HepG2 (cell line): ENCODE measurements at regions of chr10 and their contacts with region 1.

Region 1: DNA sequence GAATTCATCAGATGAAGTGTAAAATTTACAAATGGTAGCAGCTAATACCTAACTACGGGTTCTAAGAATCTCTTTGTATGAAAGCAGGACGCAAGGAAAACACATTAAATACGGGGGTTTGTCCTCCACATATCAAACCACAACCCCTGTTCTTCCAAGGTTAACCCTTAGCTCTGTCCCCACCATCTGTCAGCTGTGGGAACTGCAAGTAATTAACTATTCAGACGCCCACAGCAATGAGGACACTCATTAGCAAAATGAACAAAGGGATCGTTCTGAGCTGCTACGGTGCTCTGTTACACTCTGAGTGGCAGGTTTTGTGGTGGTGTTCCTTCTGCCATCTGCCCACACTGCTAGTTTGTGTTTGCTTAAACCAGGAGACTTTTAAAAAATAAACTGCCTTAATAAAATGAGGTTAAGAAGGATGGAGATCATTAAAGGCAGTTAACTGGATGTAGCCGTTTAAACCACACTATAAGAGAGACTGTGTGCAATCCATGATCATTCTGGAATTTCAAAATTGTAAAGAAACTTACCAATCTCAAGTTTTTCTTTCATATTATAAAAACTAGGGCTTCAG is 51.4 kb downstream of the C10orf67 start:
- DNase-seq: peak; percentile 53
- ATAC-seq: peak; percentile 85
- H3K4me3 ChIP-seq: no peak overlapping the region
- H3K27ac ChIP-seq: no peak overlapping the region
- H3K4me1 ChIP-seq: no peaks in the 10 kb centered on the region
- H3K27me3 ChIP-seq: 0 out of 5 replicates have a peak, but pooled peaks cover 0 to 3% of the 10 kb centered on the region in 2 experiments
- CTCF ChIP-seq: peak; percentile 89
- EP300 ChIP-seq: no peak
- POLR2A ChIP-seq: no peak
- RAD21 ChIP-seq: peak; percentile 75

Region 2: GRCh38 chr10:23081891-23082290 is 211.3 kb before region 1 on chr10:
- CTCF ChIA-PET with region 1: no interaction called
- POLR2A ChIA-PET with region 1: no interaction called
- in situ Hi-C with region 1: no loop called
- intact Hi-C with region 1: loop called (anchors 5 kb)
- DNase-seq: peak; percentile 23
- ATAC-seq: peak; percentile 76
- H3K4me3 ChIP-seq: no peak overlapping the region
- H3K27ac ChIP-seq: no peak overlapping the region
- H3K4me1 ChIP-seq: no peaks in the 10 kb centered on the region
- H3K27me3 ChIP-seq: peaks cover 2 to 23% of the 10 kb centered on the region in 2 experiments; a peak in 4 of 5 replicates
- CTCF ChIP-seq: peak; percentile 40
- EP300 ChIP-seq: no peak
- POLR2A ChIP-seq: no peak
- RAD21 ChIP-seq: no peak

Region 3: GRCh38 chr10:23270531-23270930 is 22.7 kb before region 1 on chr10:
- CTCF ChIA-PET with region 1: no interaction called
- POLR2A ChIA-PET with region 1: no interaction called
- in situ Hi-C with region 1: no loop called
- intact Hi-C with region 1: no loop called
- DNase-seq: no peak
- ATAC-seq: no peak
- H3K4me3 ChIP-seq: no peak overlapping the region
- H3K27ac ChIP-seq: no peak overlapping the region
- H3K4me1 ChIP-seq: peaks cover 7% of the 10 kb centered on the region
- H3K27me3 ChIP-seq: no peaks in the 10 kb centered on the region
- CTCF ChIP-seq: no peak
- EP300 ChIP-seq: no peak
- POLR2A ChIP-seq: no peak
- RAD21 ChIP-seq: no peak

Region 4: DNA sequence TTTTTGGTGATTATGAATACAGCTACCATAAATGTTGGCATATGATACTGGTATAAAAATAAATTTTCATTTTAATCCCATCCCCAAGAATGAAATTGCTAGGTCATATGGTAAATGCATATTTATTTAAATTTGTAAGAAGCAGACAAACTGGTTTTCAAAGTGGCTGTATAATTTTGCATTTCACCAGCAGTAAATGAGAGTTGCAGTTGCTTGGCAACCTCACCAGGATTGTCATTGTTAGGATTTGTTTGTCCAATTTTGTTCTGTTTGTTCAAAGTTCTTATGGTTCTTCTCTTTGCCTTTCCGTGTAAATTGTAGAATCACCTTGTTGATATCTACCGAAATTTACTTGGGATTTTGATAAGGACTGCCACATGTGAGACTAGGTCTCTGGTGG is 383.1 kb after region 1 on chr10:
- CTCF ChIA-PET with region 1: no interaction called
- POLR2A ChIA-PET with region 1: no interaction called
- in situ Hi-C with region 1: no loop called
- intact Hi-C with region 1: no loop called
- DNase-seq: no peak
- ATAC-seq: no peak
- H3K4me3 ChIP-seq: no peak overlapping the region
- H3K27ac ChIP-seq: no peak overlapping the region
- H3K4me1 ChIP-seq: no peaks in the 10 kb centered on the region
- H3K27me3 ChIP-seq: no peaks in the 10 kb centered on the region
- CTCF ChIP-seq: no peak
- EP300 ChIP-seq: no peak
- POLR2A ChIP-seq: no peak
- RAD21 ChIP-seq: no peak

Region 5: GRCh38 chr10:24664991-24665390 is 1371.8 kb after region 1 on chr10:
- CTCF ChIA-PET with region 1: no interaction called
- POLR2A ChIA-PET with region 1: no interaction called
- in situ Hi-C with region 1: no loop called
- intact Hi-C with region 1: no loop called
- DNase-seq: no peak
- ATAC-seq: no peak
- H3K4me3 ChIP-seq: no peak overlapping the region
- H3K27ac ChIP-seq: no peak overlapping the region
- H3K4me1 ChIP-seq: no peaks in the 10 kb centered on the region
- H3K27me3 ChIP-seq: no peaks in the 10 kb centered on the region
- CTCF ChIP-seq: no peak
- EP300 ChIP-seq: no peak
- POLR2A ChIP-seq: no peak
- RAD21 ChIP-seq: no peak

Region 6: DNA sequence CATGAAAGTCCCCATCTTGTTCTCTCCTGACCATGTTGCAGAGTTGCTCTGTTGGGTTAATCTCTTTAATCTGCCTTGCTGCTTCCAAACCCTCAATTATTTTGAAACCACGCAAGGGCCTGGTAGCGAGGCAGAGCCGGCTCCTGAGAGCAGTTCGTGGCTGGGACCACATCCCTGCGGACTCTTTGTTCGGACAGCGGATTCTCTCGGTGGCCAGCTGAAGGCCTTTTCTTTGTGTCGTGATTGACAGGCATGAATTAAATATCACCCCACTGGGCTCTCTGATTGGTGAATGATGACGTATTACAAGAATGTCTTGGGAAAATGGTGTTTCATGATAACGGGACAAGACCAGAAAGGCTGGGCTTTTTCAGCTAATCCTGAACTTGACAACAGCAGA is 1497.4 kb after region 1 on chr10:
- CTCF ChIA-PET with region 1: no interaction called
- POLR2A ChIA-PET with region 1: no interaction called
- in situ Hi-C with region 1: no loop called
- intact Hi-C with region 1: no loop called
- DNase-seq: no peak
- ATAC-seq: no peak
- H3K4me3 ChIP-seq: no peak overlapping the region
- H3K27ac ChIP-seq: no peak overlapping the region
- H3K4me1 ChIP-seq: no peaks in the 10 kb centered on the region
- H3K27me3 ChIP-seq: no peaks in the 10 kb centered on the region; a peak in 1 of 5 replicates
- CTCF ChIP-seq: no peak
- EP300 ChIP-seq: no peak
- POLR2A ChIP-seq: no peak
- RAD21 ChIP-seq: no peak